GM12878 (cell line): ENCODE measurements at regions of chr1 and their contacts with region 1.

Region 1: GRCh38 chr1:27906759-27907158 is 28.0 kb upstream of the SMPDL3B start:
- DNase-seq: no peak
- ATAC-seq: no peak
- H3K4me3 ChIP-seq: no peak overlapping the region
- H3K27ac ChIP-seq: no peak overlapping the region
- H3K4me1 ChIP-seq: no peaks in the 10 kb centered on the region
- H3K27me3 ChIP-seq: no peaks in the 10 kb centered on the region
- CTCF ChIP-seq: no peak
- EP300 ChIP-seq: no peak
- POLR2A ChIP-seq: no peak
- RAD21 ChIP-seq: no peak

Region 2: DNA sequence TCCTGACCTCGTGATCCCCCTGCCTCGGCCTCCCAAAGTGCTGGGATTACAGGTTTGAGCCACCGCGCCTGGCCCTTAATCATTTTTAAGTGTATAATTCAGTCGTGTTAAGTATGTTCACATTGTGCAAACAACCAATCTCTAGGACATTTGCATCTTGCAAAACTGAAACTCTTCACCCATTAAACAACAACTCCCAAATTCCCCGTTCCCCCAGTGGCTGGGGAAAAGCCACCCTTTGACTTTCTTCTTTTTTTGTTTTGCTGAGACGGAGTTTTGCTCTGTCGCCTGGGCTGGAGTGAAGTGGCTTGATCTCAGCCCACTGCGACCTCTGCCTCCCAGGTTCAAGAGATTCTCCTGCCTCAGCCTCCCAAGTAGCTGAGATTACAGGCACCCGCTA is 40.9 kb before region 1 on chr1:
- CTCF ChIA-PET with region 1: no interaction called
- POLR2A ChIA-PET with region 1: interaction called, 10 read pairs
- RAD21 ChIA-PET with region 1: no interaction called
- SMC1A ChIA-PET with region 1: interaction called, 3 read pairs
- in situ Hi-C with region 1: no loop called
- intact Hi-C with region 1: no loop called
- DNase-seq: no peak
- ATAC-seq: no peak
- H3K4me3 ChIP-seq: no peak overlapping the region
- H3K27ac ChIP-seq: 0 out of 2 replicates have a peak overlapping the region, but pooled peaks have one; percentile 8
- H3K4me1 ChIP-seq: peaks cover 59% of the 10 kb centered on the region
- H3K27me3 ChIP-seq: no peaks in the 10 kb centered on the region
- CTCF ChIP-seq: no peak
- EP300 ChIP-seq: no peak
- POLR2A ChIP-seq: no peak
- RAD21 ChIP-seq: no peak

Region 3: GRCh38 chr1:27878787-27879335 is 27.9 kb before region 1 on chr1:
- CTCF ChIA-PET with region 1: no interaction called
- POLR2A ChIA-PET with region 1: interaction called, 10 read pairs
- RAD21 ChIA-PET with region 1: interaction called, 3 read pairs
- SMC1A ChIA-PET with region 1: interaction called, 4 read pairs
- in situ Hi-C with region 1: no loop called
- intact Hi-C with region 1: no loop called
- DNase-seq: no peak
- ATAC-seq: no peak
- H3K4me3 ChIP-seq: no peak overlapping the region
- H3K27ac ChIP-seq: no peak overlapping the region
- H3K4me1 ChIP-seq: peaks cover 36% of the 10 kb centered on the region
- H3K27me3 ChIP-seq: no peaks in the 10 kb centered on the region
- CTCF ChIP-seq: no peak
- EP300 ChIP-seq: no peak
- POLR2A ChIP-seq: no peak
- RAD21 ChIP-seq: no peak

Region 4: DNA sequence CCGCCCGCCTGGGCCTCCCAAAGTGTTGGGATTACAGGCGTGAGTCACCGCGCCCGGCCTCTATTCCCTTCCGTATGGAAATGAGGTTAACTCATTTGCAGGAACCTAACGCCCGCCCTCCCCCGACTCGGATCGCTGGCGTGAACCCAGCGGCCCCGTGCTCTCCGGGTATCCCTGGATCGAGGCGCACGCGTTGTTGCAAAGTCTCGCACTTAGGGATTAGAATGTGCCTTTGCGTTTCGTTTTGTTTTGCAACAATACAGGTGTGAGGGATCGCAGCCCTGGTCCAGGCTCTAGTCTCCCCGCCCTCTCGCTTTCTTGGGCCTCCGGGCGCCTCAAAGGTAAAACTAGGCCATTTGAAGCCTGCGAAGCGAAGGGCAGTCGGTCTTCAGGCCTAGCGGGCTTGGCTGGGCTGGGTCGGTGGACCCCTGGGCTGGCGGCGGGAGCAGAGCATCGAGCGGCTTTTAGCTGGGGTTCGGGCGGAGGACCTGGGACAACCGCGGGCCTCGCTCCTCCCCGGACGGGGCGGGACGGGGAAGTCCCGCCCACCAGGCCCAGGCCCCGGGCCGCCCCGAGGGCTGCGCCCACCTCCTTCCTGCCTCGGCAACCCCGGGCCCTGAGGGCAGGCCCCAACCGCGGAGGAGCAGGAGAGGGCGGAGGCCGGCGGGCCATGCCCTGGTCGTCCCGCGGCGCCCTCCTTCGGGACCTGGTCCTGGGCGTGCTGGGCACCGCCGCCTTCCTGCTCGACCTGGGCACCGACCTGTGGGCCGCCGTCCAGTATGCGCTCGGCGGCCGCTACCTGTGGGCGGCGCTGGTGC is 52.9 kb after region 1 on chr1 and contains the start of gene XKR8:
- CTCF ChIA-PET with region 1: no interaction called
- POLR2A ChIA-PET with region 1: no interaction called
- RAD21 ChIA-PET with region 1: no interaction called
- SMC1A ChIA-PET with region 1: no interaction called
- in situ Hi-C with region 1: no loop called
- intact Hi-C with region 1: no loop called
- DNase-seq: peak; percentile 31
- ATAC-seq: peak; percentile 98
- H3K4me3 ChIP-seq: peak within 1 kb of the TSS; percentile 82
- H3K27ac ChIP-seq: 0 out of 2 replicates have a peak within 1 kb of the TSS, but pooled peaks have one; percentile 31
- H3K4me1 ChIP-seq: peaks cover 4% of the 10 kb centered on the region
- H3K27me3 ChIP-seq: no peaks in the 10 kb centered on the region
- CTCF ChIP-seq: peak; percentile 44 to 48 (median 47); a peak in 3 of 6 replicates
- EP300 ChIP-seq: no peak
- POLR2A ChIP-seq: peak; percentile 82
- RAD21 ChIP-seq: no peak
- polyA plus RNA-seq, gene XKR8: 0.80 to 1.1 TPM

Region 5: DNA sequence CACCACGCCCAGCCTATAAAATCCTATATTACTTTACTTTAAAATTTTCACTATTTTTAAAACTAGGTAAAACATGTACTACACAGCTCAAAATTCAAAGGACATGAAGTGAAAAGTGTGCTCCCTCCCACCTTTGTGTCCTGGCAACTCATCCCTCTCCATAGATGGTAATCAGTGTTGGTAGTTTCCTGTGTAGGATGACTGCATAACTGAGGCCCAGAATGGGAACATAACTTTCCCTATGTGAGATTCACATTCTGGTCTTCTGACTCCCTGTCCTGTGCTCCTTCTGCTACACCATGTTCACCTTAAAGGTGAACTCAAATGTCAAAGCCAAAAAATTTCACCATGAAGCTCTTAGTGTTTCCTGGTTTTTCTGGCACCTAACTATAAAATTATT is 92.3 kb after region 1 on chr1:
- CTCF ChIA-PET with region 1: no interaction called
- POLR2A ChIA-PET with region 1: no interaction called
- RAD21 ChIA-PET with region 1: no interaction called
- SMC1A ChIA-PET with region 1: no interaction called
- in situ Hi-C with region 1: no loop called
- intact Hi-C with region 1: no loop called
- DNase-seq: no peak
- ATAC-seq: no peak
- H3K4me3 ChIP-seq: no peak overlapping the region
- H3K27ac ChIP-seq: no peak overlapping the region
- H3K4me1 ChIP-seq: no peaks in the 10 kb centered on the region
- H3K27me3 ChIP-seq: no peaks in the 10 kb centered on the region
- CTCF ChIP-seq: no peak
- EP300 ChIP-seq: no peak
- POLR2A ChIP-seq: no peak
- RAD21 ChIP-seq: no peak

Region 6: GRCh38 chr1:28123461-28123961 is 216.8 kb after region 1 on chr1:
- CTCF ChIA-PET with region 1: no interaction called
- POLR2A ChIA-PET with region 1: no interaction called
- RAD21 ChIA-PET with region 1: no interaction called
- SMC1A ChIA-PET with region 1: no interaction called
- in situ Hi-C with region 1: no loop called
- intact Hi-C with region 1: no loop called
- DNase-seq: no peak
- ATAC-seq: no peak
- H3K4me3 ChIP-seq: no peak overlapping the region
- H3K27ac ChIP-seq: no peak overlapping the region
- H3K4me1 ChIP-seq: peaks cover 28% of the 10 kb centered on the region
- H3K27me3 ChIP-seq: no peaks in the 10 kb centered on the region
- CTCF ChIP-seq: no peak
- EP300 ChIP-seq: no peak
- POLR2A ChIP-seq: no peak
- RAD21 ChIP-seq: no peak